CD4-positive, alpha-beta memory T cell (primary cell): ENCODE measurements at regions of chr12 and their contacts with region 1.

Region 1: DNA sequence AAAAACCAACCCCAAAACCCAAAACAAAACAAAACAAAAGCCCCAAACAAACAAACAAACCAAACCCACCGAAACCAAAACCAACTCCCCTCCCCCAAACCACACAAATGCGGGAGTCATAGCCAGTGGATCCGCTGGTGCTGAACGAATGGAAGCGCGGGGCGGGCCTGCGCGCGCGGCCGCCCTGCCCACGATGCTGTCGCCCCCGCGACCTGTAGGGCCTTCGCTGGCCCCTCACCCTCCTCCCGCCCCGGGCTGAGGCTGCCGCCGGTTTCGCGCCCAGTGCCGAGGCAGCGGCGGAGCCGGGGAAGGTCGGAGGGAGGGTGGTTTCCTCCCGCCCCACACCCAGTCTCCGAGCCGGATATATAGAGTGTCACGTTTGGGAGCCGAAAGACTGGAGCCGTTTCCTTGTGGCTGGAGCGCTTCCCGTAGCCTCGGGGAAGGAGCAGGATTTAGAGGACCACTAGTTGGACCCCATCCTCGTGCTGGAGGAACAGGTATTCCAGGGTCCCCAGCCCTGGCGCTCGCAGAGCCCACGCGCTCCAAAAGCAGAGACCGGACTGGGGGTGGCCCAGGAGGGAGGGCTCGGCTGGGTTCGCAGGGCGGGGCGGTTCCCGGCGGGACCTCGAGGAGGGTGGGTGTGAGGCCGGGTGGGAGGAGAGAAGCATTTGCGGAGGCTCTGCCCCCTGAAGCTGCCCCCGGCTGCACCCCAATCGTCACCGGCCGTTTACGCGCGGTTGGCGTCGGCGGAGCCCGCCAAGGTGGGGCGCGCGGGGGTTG is at the start of gene FAR2:
- DNase-seq: peak; percentile 43 to 57 (median 55)
- H3K4me3 ChIP-seq: peak within 1 kb of the TSS; percentile 74 to 92
- H3K4me3 Mint-ChIP-seq: peak within 1 kb of the TSS; percentile 94 to 99 (median 97)
- H3K27ac ChIP-seq: peak within 1 kb of the TSS; percentile 46
- H3K27ac Mint-ChIP-seq: peak within 1 kb of the TSS; percentile 85 to 97 (median 94)
- H3K4me1 ChIP-seq: peaks cover 23% of the 10 kb centered on the region
- H3K4me1 Mint-ChIP-seq: peaks cover 23 to 49% (median 37%) of the 10 kb centered on the region in 4 donors
- H3K27me3 ChIP-seq: no peaks in the 10 kb centered on the region
- H3K27me3 Mint-ChIP-seq: no peaks in the 10 kb centered on the region
- total RNA-seq, gene FAR2: 6.2 to 10.1 TPM

Region 2: GRCh38 chr12:29164477-29165393 is 15.6 kb after region 1 on chr12:
- CTCF ChIA-PET with region 1: interaction called, 4 read pairs
- POLR2A ChIA-PET with region 1: interaction called, 9 read pairs
- intact Hi-C with region 1: loop called (anchors 1 kb)
- DNase-seq: peak in 4 of 5 donors; percentile 8 to 37 (median 24)
- H3K4me3 ChIP-seq: no peak overlapping the region
- H3K4me3 Mint-ChIP-seq: peak overlapping the region in 5 of 8 donors; percentile 15 to 37 (median 26)
- H3K27ac ChIP-seq: peak overlapping the region; percentile 1
- H3K27ac Mint-ChIP-seq: peak overlapping the region; percentile 55 to 91 (median 64)
- H3K4me1 ChIP-seq: peaks cover 22% of the 10 kb centered on the region
- H3K4me1 Mint-ChIP-seq: peaks cover 24 to 37% (median 29%) of the 10 kb centered on the region in 4 donors
- H3K27me3 ChIP-seq: no peaks in the 10 kb centered on the region
- H3K27me3 Mint-ChIP-seq: no peaks in the 10 kb centered on the region